ENCODE measurements at regions of chr6 and their contacts with region 1.

Region 1: GRCh38 chr6:38493931-38494547 is 145.7 kb downstream of the BTBD9 start:
- DNase-seq: peak; percentile 62 to 96 (median 78)
- H3K4me3 ChIP-seq: peak overlapping the region in 14 of 59 donors; percentile 3 to 44 (median 13)
- H3K27ac ChIP-seq: peak overlapping the region in 42 of 59 donors; percentile 3 to 84 (median 64)
- H3K27me3 ChIP-seq: no peaks in the 10 kb centered on the region
- CTCF ChIP-seq: peak; percentile 89 to 100 (median 97)

Region 2: DNA sequence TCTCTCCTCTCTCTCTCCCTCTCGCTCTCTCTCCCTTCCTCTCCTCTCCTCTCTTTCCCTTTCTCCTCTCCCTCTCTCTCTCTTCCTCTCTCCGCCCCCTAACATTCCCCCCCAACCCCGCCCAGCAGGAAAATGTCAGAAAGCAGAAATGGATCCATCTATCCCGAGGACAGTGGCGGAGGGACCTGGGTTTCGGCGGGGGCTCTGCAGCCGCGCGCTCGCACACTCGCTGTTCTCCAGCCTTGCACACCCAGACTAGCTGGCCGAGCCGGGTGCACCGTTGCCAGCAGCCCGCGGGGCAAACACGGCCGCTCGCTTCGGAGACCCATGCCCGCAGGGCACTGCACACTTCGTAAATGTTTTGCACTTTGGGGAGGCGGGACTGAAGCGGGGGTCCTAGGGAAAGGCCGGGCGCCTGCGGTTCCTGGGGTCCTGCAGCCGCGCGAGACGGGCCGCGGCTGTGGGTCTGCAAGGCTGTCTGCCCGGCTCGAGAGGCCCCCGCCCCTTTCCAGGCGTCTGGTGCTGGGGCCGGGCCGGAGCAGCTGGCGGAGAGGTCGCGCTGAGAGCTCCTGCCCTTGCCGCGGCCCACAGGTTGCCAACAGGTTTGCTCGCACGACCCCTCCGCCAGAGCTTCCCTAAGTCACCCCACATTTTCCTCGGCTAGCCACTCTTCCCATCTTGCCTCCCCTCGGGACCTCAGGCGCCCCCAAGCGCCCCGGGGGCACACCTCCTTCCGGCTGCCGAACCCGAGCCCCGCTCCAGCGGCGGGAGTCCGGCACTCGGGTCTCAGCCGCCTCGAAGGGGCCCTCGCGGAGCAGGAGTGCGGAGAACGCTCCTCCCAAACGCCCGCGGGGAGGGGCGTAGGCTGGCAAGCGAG is 795.5 kb before region 1 on chr6:
- intact Hi-C with region 1: loop called (anchors 5 kb)
- DNase-seq: peak in 3 of 10 donors; percentile 49 to 70 (median 50)
- H3K4me3 ChIP-seq: peak overlapping the region; percentile 58 to 95 (median 76)
- H3K27ac ChIP-seq: peak overlapping the region in 30 of 59 donors; percentile 19 to 81 (median 51)
- H3K27me3 ChIP-seq: no peaks in the 10 kb centered on the region
- CTCF ChIP-seq: no peak

Region 3: GRCh38 chr6:37791156-37791919 is 702.7 kb before region 1 on chr6:
- intact Hi-C with region 1: loop called (anchors 5 to 10 kb)
- DNase-seq: peak; percentile 92 to 97 (median 95)
- H3K4me3 ChIP-seq: peak overlapping the region in 7 of 59 donors; percentile 1 to 36 (median 30)
- H3K27ac ChIP-seq: peak overlapping the region in 3 of 59 donors; percentile 27 to 49 (median 28)
- H3K27me3 ChIP-seq: no peaks in the 10 kb centered on the region
- CTCF ChIP-seq: peak; percentile 67 to 97 (median 93)

Region 4: DNA sequence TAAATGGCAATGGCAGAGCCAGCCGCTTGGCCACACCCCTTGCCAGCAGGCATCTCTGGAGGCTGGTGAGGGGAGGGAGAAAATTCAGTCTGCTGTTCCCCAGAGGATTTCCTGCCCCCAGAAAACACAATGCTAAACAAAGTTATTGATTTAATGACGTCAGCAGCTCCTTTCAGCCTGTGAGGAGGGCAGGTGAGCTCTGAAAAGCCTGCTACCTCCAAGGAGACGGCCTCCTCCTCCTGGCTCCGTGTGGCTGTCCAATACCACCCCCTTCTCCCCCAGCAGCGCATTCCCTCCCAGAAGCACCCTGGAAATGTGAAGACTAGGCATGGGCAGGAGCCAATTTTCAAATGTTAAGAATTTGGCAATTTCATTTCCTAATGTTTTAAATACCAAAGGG is 281.5 kb before region 1 on chr6:
- intact Hi-C with region 1: loop called in 1 of 2 experiments (anchors 10 kb)
- DNase-seq: peak in 1 of 10 donors; percentile 35
- H3K4me3 ChIP-seq: no peak overlapping the region
- H3K27ac ChIP-seq: peak overlapping the region in 53 of 59 donors; percentile 33 to 86 (median 71)
- H3K27me3 ChIP-seq: no peaks in the 10 kb centered on the region
- CTCF ChIP-seq: no peak

Region 5: DNA sequence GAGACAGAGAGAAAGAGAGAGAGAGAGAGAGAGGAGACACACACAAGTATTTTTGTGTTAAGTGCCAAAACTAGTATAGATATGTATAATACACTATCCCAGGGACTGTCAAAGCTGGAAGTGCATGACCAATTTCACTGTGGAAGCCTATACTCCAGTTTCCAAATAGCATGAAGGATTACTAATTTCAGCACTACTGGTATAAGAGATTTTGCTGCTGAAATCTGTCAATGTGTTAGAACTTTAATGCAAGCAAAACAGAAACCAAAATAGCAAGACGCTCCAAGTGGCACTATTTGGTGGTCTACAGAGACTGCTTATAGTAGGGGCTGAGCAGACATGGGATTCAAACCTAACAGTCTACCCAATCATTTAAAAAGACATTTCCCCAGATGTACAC is 139.1 kb before region 1 on chr6:
- intact Hi-C with region 1: loop called in 1 of 2 experiments (anchors 5 kb)
- DNase-seq: no peak
- H3K4me3 ChIP-seq: peak overlapping the region in 3 of 59 donors; percentile 11 to 26 (median 21)
- H3K27ac ChIP-seq: peak overlapping the region in 5 of 59 donors; percentile 1 to 19 (median 14)
- H3K27me3 ChIP-seq: no peaks in the 10 kb centered on the region
- CTCF ChIP-seq: no peak

Region 6: GRCh38 chr6:38436726-38437451 is 57.1 kb before region 1 on chr6:
- intact Hi-C with region 1: no loop called
- DNase-seq: no peak
- H3K4me3 ChIP-seq: no peak overlapping the region
- H3K27ac ChIP-seq: peak overlapping the region in 4 of 59 donors; percentile 18 to 46 (median 35)
- H3K27me3 ChIP-seq: no peaks in the 10 kb centered on the region
- CTCF ChIP-seq: no peak

Region 7: GRCh38 chr6:38524436-38525145 is 30.6 kb after region 1 on chr6:
- intact Hi-C with region 1: no loop called
- DNase-seq: no peak
- H3K4me3 ChIP-seq: no peak overlapping the region
- H3K27ac ChIP-seq: no peak overlapping the region
- H3K27me3 ChIP-seq: no peaks in the 10 kb centered on the region
- CTCF ChIP-seq: no peak